PC-9 (cell line): ENCODE measurements at regions of chr12 and their contacts with region 1.

Region 1: GRCh38 chr12:5083955-5084849 is 40.5 kb downstream of the KCNA5 start:
- DNase-seq: peak in 1 of 2 experiments; percentile 22
- H3K4me3 ChIP-seq: no peak overlapping the region
- H3K27ac ChIP-seq: no peak overlapping the region
- H3K4me1 ChIP-seq: no peaks in the 10 kb centered on the region; the same call in 1 of the 2 replicates
- H3K27me3 ChIP-seq: peaks cover 42% of the 10 kb centered on the region
- CTCF ChIP-seq: peak; percentile 81

Region 2: GRCh38 chr12:4356041-4356327 is 728.2 kb before region 1 on chr12:
- CTCF ChIA-PET with region 1: no interaction called
- POLR2A ChIA-PET with region 1: no interaction called
- intact Hi-C with region 1: loop called (anchors 5 kb)
- DNase-seq: peak in 1 of 2 experiments; percentile 36
- H3K4me3 ChIP-seq: no peak overlapping the region
- H3K27ac ChIP-seq: no peak overlapping the region
- H3K4me1 ChIP-seq: no peaks in the 10 kb centered on the region
- H3K27me3 ChIP-seq: peaks cover 3% of the 10 kb centered on the region; the same call in 1 of the 2 replicates
- CTCF ChIP-seq: peak; percentile 57

Region 3: GRCh38 chr12:4857472-4858291 is 226.5 kb before region 1 on chr12:
- CTCF ChIA-PET with region 1: interaction called, 3 read pairs
- POLR2A ChIA-PET with region 1: no interaction called
- intact Hi-C with region 1: loop called (anchors 1 kb)
- DNase-seq: peak in 1 of 2 experiments; percentile 53
- H3K4me3 ChIP-seq: no peak overlapping the region
- H3K27ac ChIP-seq: no peak overlapping the region
- H3K4me1 ChIP-seq: no peaks in the 10 kb centered on the region
- H3K27me3 ChIP-seq: peaks cover 95% of the 10 kb centered on the region
- CTCF ChIP-seq: peak; percentile 89

Region 4: GRCh38 chr12:5022465-5023061 is 61.6 kb before region 1 on chr12:
- CTCF ChIA-PET with region 1: no interaction called
- POLR2A ChIA-PET with region 1: no interaction called
- intact Hi-C with region 1: loop called (anchors 1 kb)
- DNase-seq: peak in 1 of 2 experiments; percentile 33
- H3K4me3 ChIP-seq: no peak overlapping the region
- H3K27ac ChIP-seq: no peak overlapping the region
- H3K4me1 ChIP-seq: no peaks in the 10 kb centered on the region
- H3K27me3 ChIP-seq: peaks cover 55% of the 10 kb centered on the region
- CTCF ChIP-seq: peak; percentile 93

Region 5: DNA sequence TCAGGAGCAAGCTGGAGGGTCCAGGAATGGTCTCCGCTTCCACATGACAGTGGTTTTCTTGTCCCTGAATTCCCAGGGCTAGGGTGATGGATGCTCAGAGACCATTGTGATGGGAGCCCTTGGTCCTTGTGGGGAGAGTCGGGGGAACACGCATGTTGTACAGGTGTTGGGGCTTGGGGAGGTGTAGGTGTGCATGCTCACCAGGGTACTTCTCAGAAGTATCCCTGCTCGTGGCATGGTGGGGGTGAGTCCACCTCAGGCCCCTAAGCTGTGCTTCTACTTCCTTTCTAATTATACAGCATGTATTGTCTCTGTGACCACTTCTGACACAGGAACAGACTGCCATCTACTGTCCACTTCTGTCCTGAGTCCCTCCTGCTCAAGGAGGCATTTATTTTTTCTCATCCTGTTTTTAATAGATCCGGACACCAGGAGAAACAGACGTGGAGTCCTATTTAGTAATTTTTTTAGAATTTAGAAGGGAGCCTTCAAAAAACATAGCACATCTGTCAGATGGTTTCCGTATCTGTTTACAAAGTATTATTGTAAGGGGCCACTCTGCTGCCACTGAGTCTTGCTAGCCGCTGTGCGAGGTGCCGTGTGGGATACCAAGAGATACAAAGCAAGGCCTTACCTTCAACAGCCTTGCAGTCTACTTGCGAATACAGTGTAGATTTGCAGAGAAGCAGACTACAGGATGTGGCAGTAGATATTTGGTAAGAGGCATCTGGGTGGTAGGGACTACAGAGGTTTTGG is 358.2 kb after region 1 on chr12:
- CTCF ChIA-PET with region 1: no interaction called
- POLR2A ChIA-PET with region 1: no interaction called
- intact Hi-C with region 1: loop called (anchors 10 kb)
- DNase-seq: peak; percentile 17 to 43
- H3K4me3 ChIP-seq: no peak overlapping the region
- H3K27ac ChIP-seq: no peak overlapping the region
- H3K4me1 ChIP-seq: no peaks in the 10 kb centered on the region
- H3K27me3 ChIP-seq: peaks cover 28% of the 10 kb centered on the region
- CTCF ChIP-seq: peak; percentile 68